H1 (cell line): ENCODE measurements at regions of chr4 and their contacts with region 1.

Region 1: DNA sequence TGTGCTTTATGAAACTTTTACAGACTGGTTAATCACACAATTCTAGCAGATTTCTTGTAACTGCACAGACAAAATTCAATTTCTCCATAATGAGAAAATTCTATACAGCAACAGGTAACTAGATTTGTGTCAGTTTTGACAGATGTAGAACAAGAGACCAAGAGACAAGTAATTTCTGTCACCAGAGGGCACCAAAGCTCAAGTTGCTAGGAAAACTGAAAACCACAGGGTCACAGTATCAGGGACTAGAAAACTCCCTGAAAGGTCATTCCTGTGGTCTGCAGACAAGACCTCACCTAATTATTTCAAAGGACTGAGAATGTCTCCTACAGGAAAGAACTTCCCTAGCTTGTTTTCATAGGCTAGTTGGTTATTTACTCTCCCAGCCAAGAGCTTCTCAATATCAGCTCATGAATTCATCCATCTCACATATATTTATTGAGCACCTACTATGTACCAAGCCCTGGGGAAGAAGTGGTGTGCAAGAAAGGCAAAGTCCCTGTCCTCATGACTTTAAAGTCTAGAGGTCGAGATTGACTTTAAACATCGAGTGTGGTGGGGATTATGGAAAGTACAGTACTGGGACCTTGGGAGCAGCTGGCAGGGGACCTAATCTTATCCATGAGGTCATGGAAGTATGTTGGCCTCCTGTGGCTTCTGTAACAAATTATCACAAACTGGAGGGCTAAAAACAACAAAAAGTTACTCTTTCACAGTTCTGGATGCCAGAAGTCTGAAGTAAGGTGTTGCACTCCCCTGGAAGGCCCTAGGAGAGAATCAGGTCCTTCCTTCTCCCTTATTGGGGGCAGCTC is 47.8 kb upstream of the SETD7 start:
- DNase-seq: no peak
- H3K4me3 ChIP-seq: no peak overlapping the region
- H3K27ac ChIP-seq: no peak overlapping the region
- H3K4me1 ChIP-seq: no peaks in the 10 kb centered on the region
- H3K27me3 ChIP-seq: peaks cover 0 to 2% (median 0%) of the 10 kb centered on the region in 4 experiments; a peak in 1 of 7 replicates
- CTCF ChIP-seq: peak in 2 of 3 experiments; percentile 70 to 77; a peak in 3 of 4 replicates
- EP300 ChIP-seq: no peak
- POLR2A ChIP-seq: no peak
- RAD21 ChIP-seq: peak; percentile 81 to 91

Region 2: GRCh38 chr4:139554893-139555704 is 48.7 kb before region 1 on chr4:
- CTCF ChIA-PET with region 1: interaction called, 12 read pairs
- POLR2A ChIA-PET with region 1: no interaction called
- DNase-seq: peak in 1 of 2 experiments; percentile 85
- H3K4me3 ChIP-seq: peak overlapping the region; percentile 54 to 81 (median 70)
- H3K27ac ChIP-seq: no peak overlapping the region
- H3K4me1 ChIP-seq: peaks cover 0 to 10% (median 8%) of the 10 kb centered on the region in 4 experiments; a peak in 6 of 7 replicates
- H3K27me3 ChIP-seq: peaks cover 15 to 44% (median 39%) of the 10 kb centered on the region in 4 experiments
- CTCF ChIP-seq: no peak
- EP300 ChIP-seq: peak; percentile 8 to 41; a peak in 2 of 3 replicates
- POLR2A ChIP-seq: no peak
- RAD21 ChIP-seq: no peak

Region 3: DNA sequence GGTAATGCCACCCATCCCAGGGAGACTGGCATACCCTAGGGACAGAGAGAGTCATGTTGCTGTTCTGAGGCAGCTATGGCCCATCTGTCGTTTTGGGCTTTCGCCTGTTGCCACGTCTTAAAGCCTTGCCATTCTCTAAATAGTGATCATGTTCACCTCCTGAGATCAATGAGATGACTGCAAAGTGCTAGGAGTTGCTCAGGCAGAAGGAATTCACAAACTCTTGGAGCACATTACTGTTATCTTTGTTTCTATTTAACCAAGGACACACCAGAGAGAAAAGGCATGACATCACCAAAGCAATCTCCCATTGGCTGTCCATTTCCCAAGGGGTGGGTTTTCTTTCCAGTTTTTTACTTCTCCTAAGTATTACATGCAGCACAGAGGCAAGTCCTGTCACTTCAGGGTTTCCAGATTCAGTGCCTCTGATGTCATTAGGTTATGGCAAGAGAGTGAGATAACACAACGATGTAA is 10.7 kb before region 1 on chr4:
- CTCF ChIA-PET with region 1: interaction called, 47 read pairs
- POLR2A ChIA-PET with region 1: interaction called, 3 read pairs
- DNase-seq: no peak
- H3K4me3 ChIP-seq: no peak overlapping the region
- H3K27ac ChIP-seq: no peak overlapping the region
- H3K4me1 ChIP-seq: no peaks in the 10 kb centered on the region
- H3K27me3 ChIP-seq: no peaks in the 10 kb centered on the region
- CTCF ChIP-seq: no peak
- EP300 ChIP-seq: no peak
- POLR2A ChIP-seq: no peak
- RAD21 ChIP-seq: no peak

Region 4: DNA sequence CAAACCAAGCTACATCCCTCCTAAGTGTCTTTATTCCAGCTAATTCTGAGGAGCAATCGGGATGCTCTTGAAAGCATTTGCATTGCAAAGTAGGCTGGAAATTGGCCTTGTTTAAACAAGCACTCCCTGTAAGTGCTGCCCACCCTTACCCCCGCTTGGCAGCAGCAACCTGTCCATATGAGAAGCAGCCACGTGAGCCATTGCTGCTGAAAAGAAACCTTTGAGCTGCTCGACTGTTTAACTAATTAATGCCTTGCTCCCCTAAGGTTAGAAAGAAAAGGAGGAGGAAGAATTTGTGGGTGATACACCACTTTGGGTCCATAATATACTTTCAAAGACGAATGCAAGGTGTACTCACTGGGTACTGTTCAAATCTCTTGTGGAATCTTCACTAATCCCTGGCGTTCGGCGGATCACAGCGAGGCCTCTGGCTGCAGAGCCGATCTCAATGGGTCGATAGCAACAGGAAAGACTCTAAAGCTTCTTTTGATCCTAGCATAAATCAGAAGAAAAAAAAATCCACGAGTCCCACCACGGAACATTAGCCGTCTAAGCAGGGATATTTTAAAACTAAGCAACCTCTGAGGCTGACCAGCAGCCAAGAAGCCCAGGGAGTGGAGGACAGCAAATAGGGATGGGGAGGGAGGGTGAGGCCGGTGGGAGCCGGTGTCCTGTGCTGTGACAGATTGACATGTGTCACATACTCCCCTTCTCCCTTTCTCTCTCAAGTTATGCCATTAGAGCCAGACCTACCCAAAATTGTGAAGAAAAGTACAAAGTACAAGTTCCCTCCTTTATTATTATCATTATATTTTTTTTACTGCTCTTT is 24.6 kb after region 1 on chr4:
- CTCF ChIA-PET with region 1: interaction called, 63 read pairs
- POLR2A ChIA-PET with region 1: interaction called, 5 read pairs
- DNase-seq: no peak
- H3K4me3 ChIP-seq: peak overlapping the region in 2 of 4 experiments; percentile 3 to 35; a peak in 4 of 8 replicates
- H3K27ac ChIP-seq: no peak overlapping the region
- H3K4me1 ChIP-seq: peaks cover 3 to 13% (median 10%) of the 10 kb centered on the region in 4 experiments; a peak in 5 of 7 replicates
- H3K27me3 ChIP-seq: peaks cover 30 to 71% (median 64%) of the 10 kb centered on the region in 4 experiments
- CTCF ChIP-seq: no peak
- EP300 ChIP-seq: no peak
- POLR2A ChIP-seq: no peak
- RAD21 ChIP-seq: no peak

Region 5: DNA sequence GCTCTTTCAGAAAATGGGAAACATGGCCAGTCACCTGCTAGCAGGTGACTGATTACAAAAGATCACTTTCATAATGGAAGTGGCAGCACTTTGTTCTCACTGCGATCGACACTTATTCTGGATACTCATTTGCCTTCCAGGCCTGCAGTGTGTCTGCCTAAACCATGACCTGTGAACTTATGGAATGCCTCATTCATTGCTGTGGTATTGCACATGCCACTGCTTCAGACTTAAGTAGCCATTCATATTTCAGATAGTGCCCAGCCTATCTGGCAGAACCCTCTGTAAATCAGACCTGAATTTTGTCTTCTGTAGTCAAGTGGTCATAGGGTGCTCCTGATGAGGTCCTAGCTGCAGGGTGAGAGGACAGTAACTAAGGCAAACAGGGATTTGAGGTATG is 38.6 kb after region 1 on chr4:
- CTCF ChIA-PET with region 1: interaction called, 24 read pairs
- POLR2A ChIA-PET with region 1: no interaction called
- DNase-seq: no peak
- H3K4me3 ChIP-seq: no peak overlapping the region
- H3K27ac ChIP-seq: no peak overlapping the region
- H3K4me1 ChIP-seq: no peaks in the 10 kb centered on the region
- H3K27me3 ChIP-seq: no peaks in the 10 kb centered on the region; a peak in 1 of 7 replicates
- CTCF ChIP-seq: no peak
- EP300 ChIP-seq: no peak
- POLR2A ChIP-seq: no peak
- RAD21 ChIP-seq: no peak

Region 6: DNA sequence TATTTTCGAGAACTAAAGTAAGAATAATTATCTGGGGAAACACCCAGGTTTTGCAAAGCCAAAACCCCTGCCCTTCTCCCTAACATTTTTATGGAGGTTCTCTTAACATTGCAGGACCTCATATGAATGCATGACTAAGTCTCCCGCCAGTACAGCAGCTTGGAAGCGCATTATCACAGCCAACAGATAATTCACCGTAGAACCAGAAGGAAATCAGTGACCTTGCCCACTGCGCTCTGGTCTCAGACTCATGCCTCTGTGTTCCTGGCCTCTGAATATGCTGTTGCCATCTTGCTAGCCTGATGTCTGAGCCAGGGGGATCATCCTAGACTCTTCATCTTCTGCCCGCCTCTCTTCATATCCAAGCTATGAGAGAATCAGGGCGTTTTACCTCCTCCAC is 153.0 kb after region 1 on chr4:
- CTCF ChIA-PET with region 1: no interaction called
- POLR2A ChIA-PET with region 1: no interaction called
- DNase-seq: no peak
- H3K4me3 ChIP-seq: no peak overlapping the region
- H3K27ac ChIP-seq: no peak overlapping the region
- H3K4me1 ChIP-seq: peaks cover 0 to 7% (median under 1%) of the 10 kb centered on the region in 4 experiments; a peak in 1 of 7 replicates
- H3K27me3 ChIP-seq: no peaks in the 10 kb centered on the region
- CTCF ChIP-seq: no peak
- EP300 ChIP-seq: no peak
- POLR2A ChIP-seq: no peak
- RAD21 ChIP-seq: no peak